Activated naive CD4-positive, alpha-beta T cell treated with anti-CD3 and anti-CD28 coated beads for 36 hours (primary cell): ENCODE measurements at regions of chr4 and their contacts with region 1.

Region 1: GRCh38 chr4:77240469-77241066 is 83.6 kb downstream of the CCNG2 start:
- DNase-seq: peak; percentile 84
- H3K4me3 Mint-ChIP-seq: no peak overlapping the region
- H3K27ac Mint-ChIP-seq: no peak overlapping the region
- H3K4me1 Mint-ChIP-seq: no peaks in the 10 kb centered on the region
- H3K27me3 Mint-ChIP-seq: peaks cover 5% of the 10 kb centered on the region

Region 2: DNA sequence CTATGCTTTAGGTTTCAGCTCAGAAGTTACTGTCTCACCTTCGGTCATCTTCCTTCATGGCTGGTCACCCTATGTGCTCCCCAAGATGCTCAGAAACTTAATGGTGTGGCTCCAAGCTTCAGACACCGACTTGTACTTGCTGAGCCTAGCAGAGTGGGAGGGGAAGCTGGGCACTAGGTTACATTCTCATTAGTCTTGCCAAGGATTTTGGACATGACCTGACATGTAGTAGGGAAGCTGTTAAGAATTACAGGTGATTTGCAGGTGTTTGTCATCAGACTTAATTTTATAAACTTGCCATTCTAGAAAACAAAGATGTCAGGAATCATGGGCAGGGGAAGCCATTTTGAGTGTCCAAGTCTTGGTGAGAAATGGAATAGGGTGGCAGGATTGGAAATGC is 11.1 kb before region 1 on chr4:
- CTCF ChIA-PET with region 1: interaction called, 11 read pairs
- intact Hi-C with region 1: no loop called
- DNase-seq: no peak
- H3K4me3 Mint-ChIP-seq: no peak overlapping the region
- H3K27ac Mint-ChIP-seq: no peak overlapping the region
- H3K4me1 Mint-ChIP-seq: no peaks in the 10 kb centered on the region
- H3K27me3 Mint-ChIP-seq: no peaks in the 10 kb centered on the region

Region 3: DNA sequence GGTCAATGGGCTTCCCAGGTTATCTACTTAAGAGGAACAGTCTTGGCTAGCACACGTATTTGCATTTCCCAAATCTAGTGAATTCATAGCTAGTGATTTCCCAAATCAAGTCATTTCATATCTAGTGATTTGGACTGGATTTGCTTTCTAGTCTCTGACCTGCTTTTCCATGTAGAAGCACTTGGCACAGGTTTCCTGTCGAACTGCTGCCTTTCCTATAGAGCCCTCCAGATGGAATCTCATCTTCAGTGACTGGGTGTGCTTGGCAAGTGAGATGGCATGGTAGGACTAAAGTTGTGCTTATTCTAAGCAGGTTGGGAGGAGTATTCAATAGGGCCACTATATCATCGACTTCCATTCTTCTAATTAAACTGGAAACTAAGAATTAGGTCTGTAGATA is 11.2 kb after region 1 on chr4:
- CTCF ChIA-PET with region 1: interaction called, 10 read pairs
- intact Hi-C with region 1: no loop called
- DNase-seq: no peak
- H3K4me3 Mint-ChIP-seq: no peak overlapping the region
- H3K27ac Mint-ChIP-seq: no peak overlapping the region
- H3K4me1 Mint-ChIP-seq: no peaks in the 10 kb centered on the region
- H3K27me3 Mint-ChIP-seq: peaks cover 7% of the 10 kb centered on the region

Region 4: DNA sequence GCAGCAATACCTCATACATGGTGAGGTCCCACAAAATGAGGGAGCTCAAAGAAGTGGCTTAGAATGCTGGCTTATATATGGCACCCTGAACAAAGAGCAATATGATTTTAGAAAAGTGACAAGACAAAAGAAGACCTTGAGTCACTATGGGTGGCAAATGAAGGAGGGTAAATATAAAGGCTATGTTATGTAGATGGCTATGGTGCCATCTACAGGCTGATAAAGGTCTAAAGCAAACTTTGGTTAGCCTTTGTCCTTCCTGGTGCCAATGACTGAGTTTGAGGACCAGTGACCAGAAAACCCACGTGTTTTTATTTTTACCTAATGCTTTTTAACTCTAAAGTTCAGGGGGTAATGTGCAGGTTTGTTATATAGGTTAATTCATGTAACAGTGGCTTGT is 68.3 kb after region 1 on chr4:
- CTCF ChIA-PET with region 1: interaction called, 4 read pairs
- intact Hi-C with region 1: loop called (anchors 1 kb)
- DNase-seq: no peak
- H3K4me3 Mint-ChIP-seq: no peak overlapping the region
- H3K27ac Mint-ChIP-seq: no peak overlapping the region
- H3K4me1 Mint-ChIP-seq: no peaks in the 10 kb centered on the region
- H3K27me3 Mint-ChIP-seq: peaks cover 5% of the 10 kb centered on the region

Region 5: GRCh38 chr4:77358315-77358928 is 117.9 kb after region 1 on chr4:
- CTCF ChIA-PET with region 1: interaction called, 20 read pairs
- intact Hi-C with region 1: loop called (anchors 1 kb)
- DNase-seq: peak; percentile 23
- H3K4me3 Mint-ChIP-seq: no peak overlapping the region
- H3K27ac Mint-ChIP-seq: no peak overlapping the region
- H3K4me1 Mint-ChIP-seq: no peaks in the 10 kb centered on the region
- H3K27me3 Mint-ChIP-seq: no peaks in the 10 kb centered on the region

Region 6: DNA sequence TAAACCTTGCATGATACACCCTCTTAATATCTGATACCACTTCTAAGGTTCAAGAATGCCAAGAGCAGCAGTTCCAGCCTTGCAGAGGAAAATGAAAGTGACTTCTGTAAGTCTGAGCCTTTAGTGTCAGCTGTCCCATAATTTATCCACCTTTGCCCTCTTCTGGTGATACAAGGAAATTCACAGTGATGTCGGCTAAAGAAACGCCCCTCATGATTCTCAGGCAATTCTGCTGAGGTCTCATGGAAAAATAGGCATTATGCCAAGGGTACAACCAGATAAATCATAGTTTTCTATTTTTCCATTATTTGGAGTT is 192.8 kb after region 1 on chr4:
- CTCF ChIA-PET with region 1: no interaction called
- intact Hi-C with region 1: loop called (anchors 1 kb)
- DNase-seq: peak; percentile 39
- H3K4me3 Mint-ChIP-seq: no peak overlapping the region
- H3K27ac Mint-ChIP-seq: no peak overlapping the region
- H3K4me1 Mint-ChIP-seq: peaks cover 13% of the 10 kb centered on the region
- H3K27me3 Mint-ChIP-seq: no peaks in the 10 kb centered on the region

Region 7: DNA sequence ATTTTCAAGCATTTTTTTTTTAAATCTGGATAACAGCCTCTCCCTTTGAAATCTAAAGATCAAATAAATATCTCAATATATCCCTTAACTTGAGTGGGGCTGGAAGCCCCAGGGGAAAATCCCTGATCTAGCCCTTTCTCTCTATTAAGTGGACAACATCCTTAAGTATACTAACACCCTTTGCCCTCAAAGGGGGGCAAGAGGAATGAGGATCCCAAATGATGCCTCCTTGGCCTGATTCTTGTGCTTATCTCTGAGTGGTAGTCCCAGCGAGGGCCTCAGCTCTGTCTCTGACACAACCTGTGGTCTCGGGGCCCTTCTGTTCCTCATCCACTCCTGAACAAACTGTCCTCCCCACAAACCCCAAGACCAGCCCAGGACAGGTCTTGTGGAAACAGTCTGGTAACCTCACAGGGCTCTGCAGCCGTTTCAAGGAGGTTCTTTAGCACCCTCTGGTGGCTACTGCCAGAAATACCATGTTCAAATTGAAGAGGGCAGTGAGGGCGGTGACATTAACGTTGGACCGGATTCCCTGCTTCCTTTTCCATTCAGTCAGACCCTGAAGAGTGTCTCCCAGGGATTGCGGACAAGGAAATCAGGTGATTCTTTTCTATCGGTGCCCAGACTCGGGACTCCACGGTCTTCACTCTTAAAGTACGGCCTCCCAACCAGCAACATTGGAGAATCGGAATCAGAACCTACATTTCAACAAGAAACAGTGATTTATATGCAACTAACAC is 378.0 kb after region 1 on chr4:
- CTCF ChIA-PET with region 1: interaction called, 3 read pairs
- intact Hi-C with region 1: loop called (anchors 5 kb)
- DNase-seq: peak; percentile 81
- H3K4me3 Mint-ChIP-seq: no peak overlapping the region
- H3K27ac Mint-ChIP-seq: no peak overlapping the region
- H3K4me1 Mint-ChIP-seq: peaks cover 2% of the 10 kb centered on the region
- H3K27me3 Mint-ChIP-seq: peaks cover 12% of the 10 kb centered on the region